ENCODE measurements at regions of chr20 and their contacts with region 1.

Region 1: DNA sequence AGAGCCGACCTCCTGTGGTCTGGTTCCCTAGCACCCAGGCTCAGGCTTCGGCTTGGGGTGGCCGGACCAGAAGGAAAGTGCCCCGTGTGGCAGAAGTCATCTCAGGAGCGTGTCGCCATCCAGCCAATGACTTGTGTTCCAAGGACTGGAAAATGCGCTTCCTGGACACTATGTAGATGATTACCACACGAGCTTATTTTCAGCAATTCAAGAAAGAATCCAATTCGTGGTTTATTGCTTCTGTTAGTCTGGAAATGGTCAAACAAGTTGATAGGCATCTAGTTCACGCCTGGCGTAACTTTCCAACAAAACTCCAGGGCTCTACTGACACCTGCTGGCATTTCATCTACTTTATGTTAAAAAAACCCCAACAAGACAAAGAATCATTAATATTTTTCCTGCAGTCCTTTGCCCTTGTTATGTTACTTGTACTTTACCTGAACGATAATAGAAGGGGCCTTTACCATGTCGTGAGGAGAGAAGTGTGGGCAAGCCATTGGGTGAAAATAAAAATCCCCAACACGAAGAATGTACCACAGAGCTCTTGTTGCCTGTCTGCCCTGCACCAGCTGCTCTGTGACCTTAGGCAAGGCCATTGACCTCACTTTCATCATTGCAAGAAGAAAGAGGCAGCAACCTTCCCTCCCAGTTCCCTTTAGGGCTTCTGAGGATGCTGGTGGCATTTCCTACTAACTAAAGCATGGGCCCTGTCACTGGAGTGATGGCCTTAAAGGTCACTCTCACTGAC is 154.7 kb upstream of the LAMP5 start:
- DNase-seq: peak; percentile 66
- H3K4me3 ChIP-seq: no peak overlapping the region
- H3K27ac ChIP-seq: no peak overlapping the region
- H3K4me1 ChIP-seq: no peaks in the 10 kb centered on the region
- H3K27me3 ChIP-seq: no peaks in the 10 kb centered on the region
- CTCF ChIP-seq: peak; percentile 58

Region 2: DNA sequence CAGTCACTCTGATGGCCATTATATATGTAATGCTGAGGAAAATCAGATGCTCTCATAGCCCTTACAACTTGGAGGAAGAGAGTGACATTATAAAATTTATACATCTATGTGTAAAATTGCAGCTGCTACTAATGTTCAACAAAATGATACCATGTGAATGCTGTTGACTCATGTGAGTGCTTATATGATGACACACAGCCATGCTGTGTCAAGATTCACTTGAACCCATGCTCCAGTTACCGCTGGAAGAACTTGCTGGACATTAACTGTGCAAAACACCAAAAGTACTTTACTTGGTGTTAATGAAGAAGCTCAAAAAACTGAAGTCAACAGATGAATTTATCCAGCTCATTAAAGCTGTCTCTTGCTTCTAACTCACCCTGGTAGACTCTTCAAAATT is 609.7 kb before region 1 on chr20:
- CTCF ChIA-PET with region 1: no interaction called
- POLR2A ChIA-PET with region 1: no interaction called
- intact Hi-C with region 1: loop called (anchors 2 kb)
- DNase-seq: no peak
- H3K4me3 ChIP-seq: no peak overlapping the region
- H3K27ac ChIP-seq: no peak overlapping the region
- H3K4me1 ChIP-seq: no peaks in the 10 kb centered on the region
- H3K27me3 ChIP-seq: no peaks in the 10 kb centered on the region
- CTCF ChIP-seq: no peak

Region 3: DNA sequence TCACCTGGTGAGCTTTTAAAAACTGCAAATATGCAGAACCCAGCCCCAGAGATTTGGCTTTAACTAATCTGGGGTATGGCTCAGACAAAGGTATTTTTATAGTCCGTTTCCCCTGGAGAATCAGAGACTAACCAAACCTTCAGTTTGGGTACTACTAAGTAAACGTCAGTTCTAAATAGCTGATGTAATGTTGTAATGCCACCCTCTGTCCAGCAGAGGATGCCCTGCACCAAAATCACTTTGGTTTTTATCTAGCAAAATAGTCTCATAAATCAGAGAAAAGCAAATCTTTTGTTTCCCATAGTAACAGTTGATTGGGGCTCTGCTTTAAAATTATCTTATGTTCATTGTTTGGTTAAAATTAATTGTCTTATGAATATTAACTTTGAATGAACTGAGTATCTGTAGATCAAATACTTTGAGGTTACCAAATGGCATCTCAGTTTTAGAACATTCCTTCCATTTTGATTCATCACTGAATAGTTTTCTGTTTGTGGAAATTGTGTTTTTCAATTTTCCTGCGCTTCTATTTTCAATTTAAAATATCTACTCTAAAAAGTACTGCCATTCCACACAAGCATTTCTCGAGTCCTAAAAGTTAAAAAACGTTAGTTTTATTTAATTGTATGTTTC is 569.2 kb before region 1 on chr20:
- CTCF ChIA-PET with region 1: no interaction called
- POLR2A ChIA-PET with region 1: no interaction called
- intact Hi-C with region 1: loop called (anchors 1 kb)
- DNase-seq: peak; percentile 62
- H3K4me3 ChIP-seq: no peak overlapping the region
- H3K27ac ChIP-seq: no peak overlapping the region
- H3K4me1 ChIP-seq: no peaks in the 10 kb centered on the region
- H3K27me3 ChIP-seq: no peaks in the 10 kb centered on the region
- CTCF ChIP-seq: peak; percentile 92

Region 4: DNA sequence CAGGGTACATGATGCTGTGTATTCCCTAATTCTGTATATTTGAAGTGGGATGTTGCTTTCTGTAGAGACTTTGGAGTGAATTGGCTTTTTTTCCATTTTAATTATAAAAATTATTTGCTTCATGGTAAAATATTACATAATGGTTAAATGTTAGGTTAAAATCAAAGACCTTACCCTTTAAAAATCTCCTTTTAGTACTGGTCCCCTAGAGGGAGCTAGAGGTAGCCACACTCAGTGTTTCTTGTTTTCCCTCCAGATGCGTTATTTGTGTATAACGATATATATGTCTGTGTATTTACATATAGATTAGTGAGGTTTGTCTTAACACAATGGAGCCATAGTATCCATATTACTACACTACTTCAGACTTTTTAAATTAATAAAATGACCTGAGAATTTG is 144.2 kb before region 1 on chr20:
- CTCF ChIA-PET with region 1: no interaction called
- POLR2A ChIA-PET with region 1: no interaction called
- intact Hi-C with region 1: loop called (anchors 2 kb)
- DNase-seq: peak; percentile 51
- H3K4me3 ChIP-seq: no peak overlapping the region
- H3K27ac ChIP-seq: no peak overlapping the region
- H3K4me1 ChIP-seq: peaks cover 8% of the 10 kb centered on the region
- H3K27me3 ChIP-seq: no peaks in the 10 kb centered on the region
- CTCF ChIP-seq: peak; percentile 70